CD4-positive, alpha-beta T cell (primary cell): ENCODE measurements at regions of chr13 and their contacts with region 1.

Region 1: GRCh38 chr13:77176350-77176749 is 149.4 kb upstream of the FBXL3 start:
- DNase-seq: no peak
- ATAC-seq: no peak
- H3K4me3 ChIP-seq: no peak overlapping the region
- H3K4me3 Mint-ChIP-seq: no peak overlapping the region
- H3K27ac ChIP-seq: no peak overlapping the region
- H3K27ac Mint-ChIP-seq: no peak overlapping the region
- H3K4me1 ChIP-seq: no peaks in the 10 kb centered on the region
- H3K4me1 Mint-ChIP-seq: peaks cover 7% of the 10 kb centered on the region
- H3K27me3 ChIP-seq: no peaks in the 10 kb centered on the region
- H3K27me3 Mint-ChIP-seq: no peaks in the 10 kb centered on the region
- CTCF ChIP-seq: no peak

Region 2: DNA sequence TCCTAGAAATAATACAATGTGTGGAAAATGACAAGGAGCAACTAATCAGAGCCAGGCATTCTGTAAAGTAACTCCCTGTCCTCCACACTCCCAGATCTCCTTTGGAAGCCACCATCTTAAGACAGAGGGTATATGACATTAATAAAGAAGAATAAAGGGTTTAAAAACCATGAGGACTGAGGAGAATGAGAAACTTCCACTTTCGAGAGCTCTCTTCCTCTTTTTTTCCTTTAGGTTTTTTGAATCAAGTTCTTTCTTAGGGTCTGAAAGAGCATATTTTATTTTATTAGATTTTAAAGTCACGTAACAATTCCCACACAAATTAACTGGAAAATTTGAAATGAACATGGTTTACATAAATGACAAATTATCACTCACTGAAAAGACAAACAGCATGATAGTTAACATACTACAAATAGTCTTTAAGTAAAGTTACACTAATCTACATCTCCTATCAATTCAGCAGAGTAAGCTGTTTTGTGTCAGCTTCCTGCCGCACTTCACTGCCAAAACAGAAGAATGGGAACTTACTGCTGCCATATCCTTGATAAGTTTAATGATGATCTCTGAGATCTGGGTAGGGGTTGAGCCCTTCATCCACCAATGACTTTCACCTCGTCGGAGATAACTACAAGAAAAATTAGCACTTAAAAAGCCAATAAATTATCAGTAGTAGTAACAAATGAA is 110.7 kb before region 1 on chr13:
- CTCF ChIA-PET with region 1: no interaction called
- POLR2A ChIA-PET with region 1: no interaction called
- intact Hi-C with region 1: loop called in 1 of 2 experiments (anchors 5 kb)
- DNase-seq: no peak
- ATAC-seq: no peak
- H3K4me3 ChIP-seq: no peak overlapping the region
- H3K4me3 Mint-ChIP-seq: no peak overlapping the region
- H3K27ac ChIP-seq: no peak overlapping the region
- H3K27ac Mint-ChIP-seq: peak overlapping the region; percentile 27
- H3K4me1 ChIP-seq: no peaks in the 10 kb centered on the region
- H3K4me1 Mint-ChIP-seq: no peaks in the 10 kb centered on the region
- H3K27me3 ChIP-seq: no peaks in the 10 kb centered on the region
- H3K27me3 Mint-ChIP-seq: no peaks in the 10 kb centered on the region
- CTCF ChIP-seq: no peak

Region 3: GRCh38 chr13:77079902-77080413 is 96.4 kb before region 1 on chr13:
- CTCF ChIA-PET with region 1: no interaction called
- POLR2A ChIA-PET with region 1: no interaction called
- intact Hi-C with region 1: loop called in 1 of 2 experiments (anchors 5 kb)
- DNase-seq: no peak
- ATAC-seq: no peak
- H3K4me3 ChIP-seq: no peak overlapping the region
- H3K4me3 Mint-ChIP-seq: no peak overlapping the region
- H3K27ac ChIP-seq: no peak overlapping the region
- H3K27ac Mint-ChIP-seq: no peak overlapping the region
- H3K4me1 ChIP-seq: no peaks in the 10 kb centered on the region
- H3K4me1 Mint-ChIP-seq: no peaks in the 10 kb centered on the region
- H3K27me3 ChIP-seq: no peaks in the 10 kb centered on the region
- H3K27me3 Mint-ChIP-seq: no peaks in the 10 kb centered on the region
- CTCF ChIP-seq: no peak

Region 4: DNA sequence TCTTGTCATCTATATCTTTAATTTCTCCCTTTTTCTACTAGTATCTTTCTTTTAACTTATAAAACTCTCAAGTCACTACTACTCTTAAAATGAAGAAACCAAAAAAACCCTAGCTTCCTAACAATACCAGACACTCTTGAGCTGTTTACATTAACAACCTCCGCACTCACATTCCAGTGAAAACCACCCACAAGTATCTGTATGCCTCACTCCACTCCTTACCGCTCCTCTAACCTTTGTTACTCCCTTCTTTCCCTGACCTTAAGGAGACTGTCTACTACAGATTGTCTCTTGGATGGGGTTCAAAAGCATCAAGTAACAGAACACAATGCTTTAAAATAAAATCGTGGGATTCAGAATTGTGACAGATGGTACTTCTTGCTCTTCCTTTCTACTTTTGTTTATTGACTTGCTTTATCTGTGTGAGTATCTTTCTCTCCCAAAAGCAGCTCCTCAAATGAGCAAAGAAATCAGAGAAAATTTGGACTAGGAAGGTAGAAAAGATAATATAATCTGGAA is 39.4 kb before region 1 on chr13:
- CTCF ChIA-PET with region 1: no interaction called
- POLR2A ChIA-PET with region 1: no interaction called
- intact Hi-C with region 1: loop called in 1 of 2 experiments (anchors 5 kb)
- DNase-seq: no peak
- ATAC-seq: no peak
- H3K4me3 ChIP-seq: no peak overlapping the region
- H3K4me3 Mint-ChIP-seq: no peak overlapping the region
- H3K27ac ChIP-seq: no peak overlapping the region
- H3K27ac Mint-ChIP-seq: no peak overlapping the region
- H3K4me1 ChIP-seq: no peaks in the 10 kb centered on the region
- H3K4me1 Mint-ChIP-seq: no peaks in the 10 kb centered on the region
- H3K27me3 ChIP-seq: no peaks in the 10 kb centered on the region
- H3K27me3 Mint-ChIP-seq: no peaks in the 10 kb centered on the region
- CTCF ChIP-seq: no peak

Region 5: DNA sequence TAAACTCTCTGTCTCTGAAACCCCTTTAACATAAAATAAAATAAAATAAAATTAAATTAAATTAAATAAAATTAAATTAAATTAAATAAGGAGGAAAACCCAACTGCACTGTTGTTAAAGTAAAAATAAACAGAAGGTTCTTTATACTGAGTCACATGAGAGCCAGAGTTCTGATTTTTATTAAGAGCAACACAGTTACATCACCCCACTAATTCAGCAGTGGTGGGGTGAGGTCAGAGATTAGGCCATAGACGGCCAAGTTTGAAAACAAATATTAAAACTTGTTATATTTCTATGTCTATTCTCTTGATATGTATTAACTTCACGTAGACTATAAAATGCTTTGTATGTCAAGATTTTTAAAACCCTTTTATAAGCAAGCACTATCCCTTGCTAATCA is 91.0 kb after region 1 on chr13:
- CTCF ChIA-PET with region 1: no interaction called
- POLR2A ChIA-PET with region 1: no interaction called
- intact Hi-C with region 1: no loop called
- DNase-seq: no peak
- ATAC-seq: no peak
- H3K4me3 ChIP-seq: no peak overlapping the region
- H3K4me3 Mint-ChIP-seq: no peak overlapping the region
- H3K27ac ChIP-seq: no peak overlapping the region
- H3K27ac Mint-ChIP-seq: no peak overlapping the region
- H3K4me1 ChIP-seq: no peaks in the 10 kb centered on the region
- H3K4me1 Mint-ChIP-seq: peaks cover 5% of the 10 kb centered on the region
- H3K27me3 ChIP-seq: no peaks in the 10 kb centered on the region
- H3K27me3 Mint-ChIP-seq: no peaks in the 10 kb centered on the region
- CTCF ChIP-seq: no peak